Natural killer cell (primary cell): ENCODE measurements at regions of chr1 and their contacts with region 1.

Region 1: GRCh38 chr1:234925440-234926263 is 203.0 kb downstream of the TOMM20 start:
- DNase-seq: peak in 1 of 2 donors; percentile 64
- ATAC-seq: peak; percentile 28 to 50 (median 46)
- H3K4me3 ChIP-seq: no peak overlapping the region
- H3K4me3 Mint-ChIP-seq: peak overlapping the region; percentile 84
- H3K27ac ChIP-seq: peak overlapping the region; percentile 68
- H3K27ac Mint-ChIP-seq: peak overlapping the region; percentile 86 to 92
- H3K4me1 ChIP-seq: peaks cover 37% of the 10 kb centered on the region
- H3K4me1 Mint-ChIP-seq: peaks cover 34 to 35% of the 10 kb centered on the region in 2 donors
- H3K27me3 ChIP-seq: no peaks in the 10 kb centered on the region
- H3K27me3 Mint-ChIP-seq: peaks cover 0 to 5% of the 10 kb centered on the region in 2 donors
- CTCF ChIP-seq: no peak

Region 2: DNA sequence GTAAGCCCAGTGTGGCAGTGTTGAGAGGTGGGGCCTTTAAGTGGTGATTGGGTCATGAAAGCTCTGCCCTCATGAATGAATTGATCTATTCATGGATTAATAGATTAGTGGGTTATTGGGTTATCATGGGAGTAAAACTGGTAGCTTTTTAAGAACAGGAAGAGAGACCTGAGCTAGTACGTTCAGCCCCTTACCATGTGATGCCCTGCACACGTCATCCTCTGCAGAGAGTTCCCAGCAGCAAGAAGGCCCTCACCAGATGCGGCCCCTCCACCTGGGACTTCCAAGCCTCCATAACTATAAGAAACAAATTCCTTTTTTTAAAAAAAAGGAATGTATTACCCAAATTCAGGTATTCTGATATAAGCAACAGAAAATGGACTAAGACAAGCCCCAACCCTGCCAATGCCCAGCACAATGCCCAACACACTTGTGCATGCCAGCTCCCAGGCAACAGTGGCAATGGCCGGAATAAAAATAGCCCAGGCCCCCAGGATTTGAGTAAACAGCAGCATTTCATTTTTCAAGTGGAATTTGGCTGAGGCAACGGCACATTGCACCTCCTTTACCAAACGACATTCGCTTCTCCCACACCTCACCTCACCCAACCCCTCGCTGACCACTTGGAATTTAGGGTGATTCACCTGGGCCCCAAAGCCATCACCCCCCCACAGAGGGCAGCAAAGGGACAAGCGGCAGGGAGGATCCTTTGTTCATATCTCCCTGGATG is 12.9 kb before region 1 on chr1:
- intact Hi-C with region 1: loop called (anchors 1 kb)
- DNase-seq: peak in 1 of 2 donors; percentile 59
- ATAC-seq: peak in 1 of 3 donors; percentile 30
- H3K4me3 ChIP-seq: no peak overlapping the region
- H3K4me3 Mint-ChIP-seq: peak overlapping the region; percentile 55
- H3K27ac ChIP-seq: peak overlapping the region; percentile 64
- H3K27ac Mint-ChIP-seq: peak overlapping the region; percentile 79 to 94
- H3K4me1 ChIP-seq: peaks cover 30% of the 10 kb centered on the region
- H3K4me1 Mint-ChIP-seq: peaks cover 45 to 51% of the 10 kb centered on the region in 2 donors
- H3K27me3 ChIP-seq: no peaks in the 10 kb centered on the region
- H3K27me3 Mint-ChIP-seq: no peaks in the 10 kb centered on the region
- CTCF ChIP-seq: no peak